CD8-positive, alpha-beta T cell (primary cell): ENCODE measurements at regions of chr20 and their contacts with region 1.

Region 1: GRCh38 chr20:35146920-35147574 is at the start of gene EDEM2:
- DNase-seq: peak; percentile 79 to 97 (median 92)
- ATAC-seq: peak; percentile 81
- H3K4me3 ChIP-seq: peak within 1 kb of the TSS; percentile 78 to 94
- H3K4me3 Mint-ChIP-seq: peak within 1 kb of the TSS; percentile 88
- H3K27ac ChIP-seq: peak within 1 kb of the TSS; percentile 70 to 79
- H3K27ac Mint-ChIP-seq: peak within 1 kb of the TSS; percentile 86
- H3K4me1 ChIP-seq: peaks cover 18% of the 10 kb centered on the region
- H3K4me1 Mint-ChIP-seq: peaks cover 38% of the 10 kb centered on the region
- H3K27me3 ChIP-seq: no peaks in the 10 kb centered on the region
- H3K27me3 Mint-ChIP-seq: no peaks in the 10 kb centered on the region
- CTCF ChIP-seq: no peak
- total RNA-seq, gene EDEM2: 13.8 TPM

Region 2: DNA sequence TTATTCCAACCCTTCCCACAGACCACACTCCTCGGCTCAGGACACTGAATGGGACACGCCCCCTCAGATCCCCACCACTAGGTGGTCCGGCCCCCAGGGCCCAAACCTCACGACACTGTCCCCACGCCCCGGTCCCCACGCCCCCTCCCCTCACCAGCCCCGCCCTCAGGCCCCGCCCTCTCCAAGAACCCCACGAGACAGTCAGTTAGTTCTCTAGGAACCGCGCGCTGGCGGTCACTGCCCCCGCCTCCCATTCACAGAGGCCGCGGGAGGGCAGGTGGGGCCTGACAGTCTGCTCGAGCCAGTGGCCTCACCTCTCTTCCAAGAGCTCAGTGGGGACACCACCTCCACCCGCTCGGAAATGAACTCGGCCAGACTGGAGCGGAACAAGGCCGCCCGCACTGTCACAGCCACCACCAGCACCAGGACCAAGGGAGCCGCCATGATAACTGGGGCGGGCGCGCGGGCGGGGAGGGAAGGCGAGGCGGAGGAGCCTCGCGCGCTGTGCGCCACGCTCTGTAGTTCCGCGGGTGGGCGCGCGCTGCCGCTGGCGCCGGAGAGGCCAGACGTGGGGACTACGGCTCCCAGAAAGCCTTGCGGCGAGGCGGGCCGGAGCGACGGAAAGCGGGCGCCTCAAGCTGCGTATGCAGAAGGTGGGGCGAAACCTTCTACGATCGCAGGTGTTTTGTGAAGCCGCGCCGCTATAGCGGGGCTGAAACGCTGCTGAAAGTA is 470.2 kb before region 1 on chr20 and contains the start of gene PIGU:
- CTCF ChIA-PET with region 1: no interaction called
- POLR2A ChIA-PET with region 1: no interaction called
- intact Hi-C with region 1: loop called in 1 of 2 experiments (anchors 5 kb)
- DNase-seq: peak; percentile 92 to 98 (median 96)
- ATAC-seq: peak; percentile 96
- H3K4me3 ChIP-seq: peak within 1 kb of the TSS; percentile 80 to 94
- H3K4me3 Mint-ChIP-seq: peak within 1 kb of the TSS; percentile 97
- H3K27ac ChIP-seq: peak within 1 kb of the TSS; percentile 83 to 90
- H3K27ac Mint-ChIP-seq: peak within 1 kb of the TSS; percentile 96
- H3K4me1 ChIP-seq: peaks cover 16% of the 10 kb centered on the region
- H3K4me1 Mint-ChIP-seq: peaks cover 22% of the 10 kb centered on the region
- H3K27me3 ChIP-seq: no peaks in the 10 kb centered on the region
- H3K27me3 Mint-ChIP-seq: no peaks in the 10 kb centered on the region
- CTCF ChIP-seq: no peak
- total RNA-seq, gene PIGU: 3.3 to 5.2 TPM

Region 3: DNA sequence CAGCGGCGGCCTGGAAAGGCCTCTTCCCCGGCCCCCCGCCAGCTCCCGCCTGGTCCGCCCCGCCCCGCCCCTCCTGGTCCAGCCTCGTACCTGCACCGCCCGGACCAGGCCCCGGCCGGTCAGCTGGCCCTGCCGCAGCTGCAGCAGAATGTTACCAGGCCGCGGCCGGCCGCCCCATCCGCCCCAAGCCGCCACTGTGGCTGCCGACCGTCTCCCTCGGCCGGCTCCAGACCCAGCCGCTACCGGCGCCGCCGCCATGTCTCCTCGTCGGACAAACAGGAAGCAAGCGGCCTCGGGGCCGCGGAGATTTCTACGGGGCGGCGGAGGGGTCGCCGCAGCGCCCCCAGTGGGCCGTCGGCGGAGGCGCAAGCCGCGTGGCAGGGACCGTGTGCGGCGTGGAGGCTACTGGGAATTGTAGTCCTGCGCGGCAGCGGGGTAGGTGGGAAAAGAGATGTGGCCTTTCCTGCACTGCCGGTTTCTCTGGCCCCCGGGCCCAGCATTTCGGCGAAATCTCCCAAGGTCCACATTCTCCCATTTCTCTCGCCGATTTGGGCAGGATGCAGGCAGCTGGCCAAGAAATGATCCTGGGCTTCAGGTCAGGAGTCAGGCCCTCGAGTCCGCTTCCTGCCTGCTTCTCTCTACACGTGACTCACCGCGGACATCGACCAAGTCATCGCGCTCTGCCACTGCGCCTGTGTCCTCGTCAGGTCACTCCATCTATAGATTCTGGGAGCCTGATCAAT is 54.4 kb before region 1 on chr20 and contains the start of gene TRPC4AP:
- CTCF ChIA-PET with region 1: interaction called, 31 read pairs
- POLR2A ChIA-PET with region 1: interaction called, 3 read pairs
- intact Hi-C with region 1: loop called (anchors 1 to 2 kb)
- DNase-seq: peak; percentile 77 to 95 (median 87)
- ATAC-seq: peak; percentile 97
- H3K4me3 ChIP-seq: peak within 1 kb of the TSS; percentile 84 to 91
- H3K4me3 Mint-ChIP-seq: peak within 1 kb of the TSS; percentile 89
- H3K27ac ChIP-seq: peak within 1 kb of the TSS; percentile 72 to 74
- H3K27ac Mint-ChIP-seq: peak within 1 kb of the TSS; percentile 91
- H3K4me1 ChIP-seq: peaks cover 42% of the 10 kb centered on the region
- H3K4me1 Mint-ChIP-seq: peaks cover 49% of the 10 kb centered on the region
- H3K27me3 ChIP-seq: no peaks in the 10 kb centered on the region
- H3K27me3 Mint-ChIP-seq: no peaks in the 10 kb centered on the region
- CTCF ChIP-seq: peak; percentile 88
- total RNA-seq, gene TRPC4AP: 63.3 to 64.0 TPM

Region 4: DNA sequence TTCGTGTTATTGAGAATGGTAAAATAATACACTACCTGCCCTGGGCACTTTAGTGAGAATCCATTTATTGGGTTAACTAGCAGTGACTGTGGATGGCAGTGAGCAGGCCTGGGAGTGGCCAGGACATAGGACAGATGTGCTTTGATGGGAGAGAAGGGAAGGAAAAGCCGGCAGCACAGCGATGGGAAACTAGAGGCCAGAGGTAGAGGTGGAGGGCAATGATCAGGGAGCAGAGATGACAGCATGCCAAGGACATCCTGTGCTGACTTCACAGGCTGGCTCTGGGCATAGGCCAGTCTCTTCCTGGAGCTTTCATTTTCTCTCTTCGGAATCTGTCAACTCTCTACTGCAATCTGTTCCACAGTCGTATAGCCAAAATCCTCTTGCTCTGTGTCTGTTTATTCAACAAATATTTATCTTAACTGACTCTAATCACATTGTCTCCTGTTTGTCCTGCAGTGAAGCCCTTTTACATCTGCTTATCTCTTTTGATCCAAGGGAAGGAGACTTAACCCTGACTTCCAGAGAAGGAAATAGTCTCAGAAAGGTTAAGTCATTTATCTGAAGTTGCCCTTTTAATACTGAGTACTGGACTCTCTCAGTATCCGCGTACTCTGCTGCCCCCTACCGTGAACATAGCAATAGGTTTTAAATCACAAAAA is 61.0 kb after region 1 on chr20:
- CTCF ChIA-PET with region 1: interaction called, 161 read pairs
- POLR2A ChIA-PET with region 1: interaction called, 4 read pairs
- intact Hi-C with region 1: loop called (anchors 1 kb)
- DNase-seq: peak; percentile 54 to 87 (median 82)
- ATAC-seq: peak; percentile 86
- H3K4me3 ChIP-seq: no peak overlapping the region
- H3K4me3 Mint-ChIP-seq: no peak overlapping the region
- H3K27ac ChIP-seq: no peak overlapping the region
- H3K27ac Mint-ChIP-seq: no peak overlapping the region
- H3K4me1 ChIP-seq: no peaks in the 10 kb centered on the region
- H3K4me1 Mint-ChIP-seq: no peaks in the 10 kb centered on the region
- H3K27me3 ChIP-seq: no peaks in the 10 kb centered on the region
- H3K27me3 Mint-ChIP-seq: no peaks in the 10 kb centered on the region
- CTCF ChIP-seq: peak; percentile 77

Region 5: DNA sequence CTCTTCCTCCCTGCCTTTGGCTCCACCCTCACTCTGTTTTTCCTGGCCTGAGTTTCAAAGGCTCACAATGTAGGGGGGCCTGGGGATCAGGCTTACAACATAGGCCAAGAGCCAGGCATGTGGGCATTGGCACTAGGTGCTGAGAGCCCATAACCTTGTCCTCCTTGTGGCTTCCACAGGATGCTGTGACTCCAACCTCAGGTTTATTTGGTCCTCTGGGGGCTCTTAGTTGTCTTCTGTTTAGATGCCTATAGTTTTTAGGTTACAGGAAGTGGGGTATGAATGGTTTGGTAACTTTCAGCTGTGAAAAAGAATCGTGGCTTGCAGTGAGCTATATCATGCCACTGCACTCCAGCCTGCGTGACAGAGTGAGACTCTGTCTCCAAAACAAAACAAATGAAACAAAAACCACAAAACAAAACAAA is 105.0 kb after region 1 on chr20:
- CTCF ChIA-PET with region 1: interaction called, 11 read pairs
- POLR2A ChIA-PET with region 1: interaction called, 3 read pairs
- intact Hi-C with region 1: no loop called
- DNase-seq: peak in 8 of 9 experiments; percentile 14 to 89 (median 50)
- ATAC-seq: peak; percentile 91
- H3K4me3 ChIP-seq: no peak overlapping the region
- H3K4me3 Mint-ChIP-seq: peak overlapping the region; percentile 68
- H3K27ac ChIP-seq: peak overlapping the region; percentile 57 to 89
- H3K27ac Mint-ChIP-seq: peak overlapping the region; percentile 99
- H3K4me1 ChIP-seq: peaks cover 22% of the 10 kb centered on the region
- H3K4me1 Mint-ChIP-seq: peaks cover 28% of the 10 kb centered on the region
- H3K27me3 ChIP-seq: no peaks in the 10 kb centered on the region
- H3K27me3 Mint-ChIP-seq: no peaks in the 10 kb centered on the region
- CTCF ChIP-seq: no peak

Region 6: DNA sequence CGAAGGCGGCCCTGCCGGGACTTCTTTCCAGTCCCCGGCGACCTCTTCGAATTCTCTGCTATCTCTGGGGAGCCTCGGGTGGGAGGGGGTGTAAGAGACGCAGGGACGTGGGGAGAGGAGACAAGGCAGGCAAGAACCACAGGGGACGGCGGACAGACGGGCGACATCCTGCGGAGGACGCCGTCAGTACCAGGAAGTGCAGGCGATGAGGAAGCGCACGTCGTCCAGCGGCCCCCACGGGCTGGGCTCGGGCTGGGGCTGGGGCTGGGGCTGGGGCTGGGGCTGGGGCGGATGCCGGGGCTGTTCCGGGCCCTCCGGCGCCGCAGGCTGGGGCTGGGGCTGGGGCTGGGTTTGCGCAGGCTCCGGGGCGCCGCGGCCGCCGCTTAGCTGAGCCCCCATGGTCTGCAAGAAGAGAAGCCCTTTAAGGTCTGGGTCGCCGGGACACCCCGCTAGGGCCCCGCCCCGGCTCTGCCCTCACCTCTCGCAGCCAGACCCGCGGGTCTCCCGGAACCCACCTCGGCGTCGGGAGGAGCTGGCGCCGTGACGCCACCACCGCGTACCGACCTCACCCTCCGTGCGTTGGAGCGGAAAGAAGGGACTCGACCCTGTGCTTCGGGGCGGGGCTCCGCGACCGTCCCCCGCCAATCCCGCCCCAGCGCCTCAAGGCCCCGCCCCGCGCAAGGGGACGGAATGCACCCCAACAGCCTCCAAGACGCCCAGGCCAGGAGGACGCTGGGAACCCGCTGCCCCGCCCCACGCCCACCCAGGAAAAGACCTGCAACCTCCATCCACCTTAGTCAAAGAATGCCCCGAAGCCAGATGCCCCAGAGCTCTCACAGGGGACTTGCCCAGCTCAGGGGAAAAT is 130.7 kb after region 1 on chr20 and contains the start of gene MMP24OS:
- CTCF ChIA-PET with region 1: interaction called, 54 read pairs
- POLR2A ChIA-PET with region 1: interaction called, 4 read pairs
- intact Hi-C with region 1: loop called in 1 of 2 experiments (anchors 2 kb)
- DNase-seq: peak; percentile 78 to 96 (median 89)
- ATAC-seq: peak; percentile 88
- H3K4me3 ChIP-seq: peak within 1 kb of the TSS; percentile 81
- H3K4me3 Mint-ChIP-seq: peak within 1 kb of the TSS; percentile 96
- H3K27ac ChIP-seq: peak within 1 kb of the TSS; percentile 92 to 99
- H3K27ac Mint-ChIP-seq: peak within 1 kb of the TSS; percentile 99
- H3K4me1 ChIP-seq: peaks cover 14% of the 10 kb centered on the region
- H3K4me1 Mint-ChIP-seq: peaks cover 28% of the 10 kb centered on the region
- H3K27me3 ChIP-seq: no peaks in the 10 kb centered on the region
- H3K27me3 Mint-ChIP-seq: no peaks in the 10 kb centered on the region
- CTCF ChIP-seq: no peak
- total RNA-seq, gene MMP24OS: 64.5 to 67.1 TPM

Region 7: DNA sequence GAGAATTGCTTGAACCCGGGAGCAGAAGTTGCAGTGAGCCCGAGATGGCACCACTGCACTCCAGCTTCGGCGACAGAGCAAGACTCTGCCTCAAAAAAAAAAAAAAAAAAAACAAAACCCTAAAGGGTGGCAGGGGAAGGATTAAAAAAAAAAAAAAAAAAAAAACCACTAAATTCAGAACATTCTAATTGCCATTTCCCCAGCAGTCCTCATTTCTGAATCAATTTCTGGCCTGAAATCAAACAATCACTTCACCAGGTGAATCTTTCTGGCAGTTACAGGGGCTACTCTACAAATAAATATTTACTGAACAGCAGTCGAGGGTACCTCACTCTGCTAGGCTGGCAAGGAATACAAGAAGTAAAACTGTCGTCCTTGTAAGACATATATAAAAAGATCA is 263.6 kb after region 1 on chr20:
- CTCF ChIA-PET with region 1: no interaction called
- POLR2A ChIA-PET with region 1: no interaction called
- intact Hi-C with region 1: loop called (anchors 5 kb)
- DNase-seq: no peak
- ATAC-seq: no peak
- H3K4me3 ChIP-seq: no peak overlapping the region
- H3K4me3 Mint-ChIP-seq: peak overlapping the region; percentile 96
- H3K27ac ChIP-seq: no peak overlapping the region
- H3K27ac Mint-ChIP-seq: peak overlapping the region; percentile 97
- H3K4me1 ChIP-seq: peaks cover 8% of the 10 kb centered on the region
- H3K4me1 Mint-ChIP-seq: peaks cover 25% of the 10 kb centered on the region
- H3K27me3 ChIP-seq: no peaks in the 10 kb centered on the region
- H3K27me3 Mint-ChIP-seq: no peaks in the 10 kb centered on the region
- CTCF ChIP-seq: no peak